PC-3 (cell line): ENCODE measurements at regions of chrX and their contacts with region 1.

Region 1: DNA sequence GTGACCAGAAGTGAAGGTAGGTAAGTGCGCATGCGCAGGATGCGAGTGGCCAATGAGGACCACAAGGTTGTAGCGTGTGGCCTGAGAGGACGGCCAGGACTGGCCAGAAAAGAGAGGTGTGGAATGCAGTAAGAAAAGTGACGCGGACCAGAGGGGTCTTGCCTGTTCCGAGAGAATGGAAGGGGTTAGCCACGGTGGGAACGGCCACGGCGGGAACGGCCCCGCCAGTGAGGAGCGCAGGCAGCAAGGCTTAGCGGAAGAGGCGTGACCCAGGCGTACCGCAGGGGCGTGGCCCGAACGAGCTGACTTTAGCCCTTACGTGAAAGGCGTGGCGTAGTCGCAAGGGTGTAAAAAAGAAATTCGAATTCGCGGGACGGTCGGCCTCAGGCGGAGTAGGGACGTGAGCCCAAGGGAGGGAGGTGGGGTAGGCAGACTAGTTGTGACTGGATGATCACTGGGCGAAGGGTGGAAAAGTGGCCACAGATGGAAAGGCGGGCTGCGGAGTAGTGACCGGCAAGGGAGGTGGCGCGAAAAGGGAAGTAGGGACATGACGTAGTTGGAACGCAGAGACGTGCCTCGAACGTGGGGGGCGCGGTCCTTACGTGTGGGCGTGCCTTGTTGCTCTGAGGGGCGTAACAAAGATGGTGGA is 10.4 kb upstream of the CLTRN start:
- DNase-seq: peak; percentile 94
- ATAC-seq: peak; percentile 80
- H3K4me3 ChIP-seq: peak overlapping the region; percentile 87
- H3K27ac ChIP-seq: peak overlapping the region; percentile 96
- H3K4me1 ChIP-seq: peaks cover 44% of the 10 kb centered on the region
- H3K27me3 ChIP-seq: no peaks in the 10 kb centered on the region
- CTCF ChIP-seq: no peak

Region 2: DNA sequence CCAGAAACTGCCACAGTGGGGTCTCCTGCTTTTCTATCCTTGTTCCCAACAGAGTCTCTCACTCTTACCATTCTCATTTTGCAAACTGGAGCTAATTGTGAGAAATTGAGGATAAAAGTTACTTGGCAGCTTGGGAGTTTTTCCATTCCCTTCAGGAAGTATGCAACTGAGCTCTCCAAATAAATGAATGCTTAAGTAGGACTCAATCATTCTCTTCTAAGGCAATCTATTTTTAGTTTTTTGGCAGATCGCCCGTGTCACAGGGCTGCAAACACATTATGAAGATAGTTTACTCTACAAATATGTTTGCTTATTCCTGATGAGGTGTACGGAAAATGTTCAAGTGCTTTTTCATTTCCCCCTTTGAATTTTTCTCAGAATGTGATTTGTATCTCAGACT is 364.8 kb before region 1 on chrX:
- CTCF ChIA-PET with region 1: interaction called, 11 read pairs
- POLR2A ChIA-PET with region 1: no interaction called
- intact Hi-C with region 1: no loop called
- DNase-seq: peak; percentile 74
- ATAC-seq: peak; percentile 70
- H3K4me3 ChIP-seq: no peak overlapping the region
- H3K27ac ChIP-seq: peak overlapping the region; percentile 60
- H3K4me1 ChIP-seq: peaks cover 12% of the 10 kb centered on the region
- H3K27me3 ChIP-seq: no peaks in the 10 kb centered on the region
- CTCF ChIP-seq: no peak

Region 3: DNA sequence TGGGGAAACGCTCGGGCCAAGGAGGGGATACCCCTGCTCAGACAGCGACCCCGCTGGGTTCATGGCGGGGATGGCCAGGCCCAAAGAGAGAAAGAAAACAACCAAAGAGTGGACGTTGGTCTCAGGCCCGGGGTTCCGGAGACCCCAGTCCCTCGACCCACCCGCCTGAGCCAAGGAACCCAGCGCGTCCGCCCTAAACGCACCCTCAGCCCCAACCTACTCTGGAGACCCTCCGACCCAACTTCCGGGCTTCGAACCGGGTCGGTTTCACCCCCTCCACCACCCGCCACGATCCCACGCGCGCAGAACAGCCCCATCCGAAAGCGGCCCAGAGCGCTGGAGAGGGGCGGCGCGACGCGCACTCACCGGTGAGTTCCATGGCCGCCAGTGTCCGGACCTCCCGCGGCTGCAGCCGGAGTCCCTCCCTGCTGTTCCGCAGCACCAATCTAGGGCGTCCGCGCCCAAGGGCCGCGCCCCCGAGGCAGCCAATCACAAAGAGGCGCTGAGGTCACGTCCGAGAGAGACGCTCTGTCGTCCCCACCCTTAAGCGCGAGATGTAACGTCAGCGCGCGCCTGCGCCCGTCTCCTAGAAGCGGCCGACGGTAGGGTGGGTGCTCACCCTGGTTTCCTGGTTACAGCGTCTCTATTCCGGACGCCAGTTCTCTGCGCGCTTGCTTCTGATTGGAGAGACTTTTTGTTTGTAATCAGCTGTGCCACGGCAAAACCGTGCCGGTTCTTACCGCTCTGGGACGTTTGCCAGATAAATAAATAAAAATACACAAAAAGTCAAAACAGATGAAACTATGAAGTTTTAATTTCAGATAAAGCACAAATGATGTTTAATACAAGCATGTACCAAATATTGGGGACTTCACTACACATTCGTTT is 339.6 kb before region 1 on chrX and contains the start of gene PIGA:
- CTCF ChIA-PET with region 1: no interaction called
- POLR2A ChIA-PET with region 1: no interaction called
- intact Hi-C with region 1: loop called (anchors 10 kb)
- DNase-seq: peak; percentile 98
- ATAC-seq: peak; percentile 96
- H3K4me3 ChIP-seq: peak within 1 kb of the TSS; percentile 86
- H3K27ac ChIP-seq: peak within 1 kb of the TSS; percentile 75
- H3K4me1 ChIP-seq: peaks cover 19% of the 10 kb centered on the region
- H3K27me3 ChIP-seq: peaks cover 17% of the 10 kb centered on the region
- CTCF ChIP-seq: no peak
- total RNA-seq, gene PIGA: 11.5 and 17.9 TPM in 2 replicates

Region 4: GRCh38 chrX:15493118-15493962 is 181.6 kb before region 1 on chrX and contains the start of gene PIR:
- CTCF ChIA-PET with region 1: no interaction called
- POLR2A ChIA-PET with region 1: no interaction called
- intact Hi-C with region 1: loop called (anchors 5 kb)
- DNase-seq: peak; percentile 92
- ATAC-seq: peak; percentile 99
- H3K4me3 ChIP-seq: peak within 1 kb of the TSS; percentile 84
- H3K27ac ChIP-seq: peak within 1 kb of the TSS; percentile 81
- H3K4me1 ChIP-seq: peaks cover 16% of the 10 kb centered on the region
- H3K27me3 ChIP-seq: no peaks in the 10 kb centered on the region
- CTCF ChIP-seq: peak; percentile 70
- total RNA-seq, gene PIR: 48.6 and 50.8 TPM in 2 replicates